Tibial artery (tissue), 4 donors: ENCODE measurements at regions of chr4 and their contacts with region 1.

Region 1: DNA sequence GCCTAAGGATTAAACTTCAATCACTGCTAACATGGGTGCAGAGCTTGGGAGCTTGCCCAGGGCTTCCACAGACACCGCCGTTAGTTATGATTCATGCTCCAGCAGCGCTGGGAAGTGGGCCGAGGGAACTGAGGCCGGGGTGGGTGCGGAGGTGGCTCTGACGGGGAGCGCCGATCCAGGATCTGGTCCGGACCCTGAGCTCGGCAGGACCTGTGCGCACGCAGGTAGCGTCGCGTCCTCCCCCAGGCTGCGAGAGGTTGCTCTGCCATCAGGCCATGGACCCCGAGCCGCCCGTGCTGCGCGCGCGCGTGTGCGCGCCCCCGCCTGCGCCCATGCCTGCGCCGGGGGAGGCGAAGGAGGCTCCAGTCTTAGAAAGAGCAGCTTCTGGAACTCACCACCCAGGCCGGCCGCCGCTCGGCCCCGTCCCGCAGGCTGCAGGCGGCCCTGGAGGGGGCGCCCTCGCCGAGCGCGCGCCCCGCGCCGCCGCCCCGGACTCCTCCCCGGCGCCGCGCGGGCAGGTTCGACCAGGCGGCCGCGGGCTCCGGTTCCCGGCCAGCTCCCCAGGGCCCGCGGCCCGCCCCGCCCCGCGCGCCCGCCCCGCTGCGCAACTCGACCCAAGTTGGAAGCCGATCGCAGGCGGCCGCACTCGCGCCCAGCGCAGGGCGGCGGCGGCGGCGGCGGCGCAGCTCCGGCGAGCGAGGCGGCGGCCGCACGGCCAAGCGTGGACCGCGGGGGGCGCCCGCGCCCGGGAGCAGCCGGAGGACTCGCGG is 729 bp upstream of the ADRA2C start:
- DNase-seq: peak; percentile 44 to 91
- H3K4me3 ChIP-seq: peak overlapping the region; percentile 73 to 74
- H3K27ac ChIP-seq: peak overlapping the region; percentile 93 to 96
- H3K4me1 ChIP-seq: peaks cover 0 to 78% (median 36%) of the 10 kb centered on the region in 4 donors
- H3K27me3 ChIP-seq: peaks cover 0 to 13% of the 10 kb centered on the region in 2 donors
- CTCF ChIP-seq: peak in 1 of 2 experiments; percentile 41

Region 2: DNA sequence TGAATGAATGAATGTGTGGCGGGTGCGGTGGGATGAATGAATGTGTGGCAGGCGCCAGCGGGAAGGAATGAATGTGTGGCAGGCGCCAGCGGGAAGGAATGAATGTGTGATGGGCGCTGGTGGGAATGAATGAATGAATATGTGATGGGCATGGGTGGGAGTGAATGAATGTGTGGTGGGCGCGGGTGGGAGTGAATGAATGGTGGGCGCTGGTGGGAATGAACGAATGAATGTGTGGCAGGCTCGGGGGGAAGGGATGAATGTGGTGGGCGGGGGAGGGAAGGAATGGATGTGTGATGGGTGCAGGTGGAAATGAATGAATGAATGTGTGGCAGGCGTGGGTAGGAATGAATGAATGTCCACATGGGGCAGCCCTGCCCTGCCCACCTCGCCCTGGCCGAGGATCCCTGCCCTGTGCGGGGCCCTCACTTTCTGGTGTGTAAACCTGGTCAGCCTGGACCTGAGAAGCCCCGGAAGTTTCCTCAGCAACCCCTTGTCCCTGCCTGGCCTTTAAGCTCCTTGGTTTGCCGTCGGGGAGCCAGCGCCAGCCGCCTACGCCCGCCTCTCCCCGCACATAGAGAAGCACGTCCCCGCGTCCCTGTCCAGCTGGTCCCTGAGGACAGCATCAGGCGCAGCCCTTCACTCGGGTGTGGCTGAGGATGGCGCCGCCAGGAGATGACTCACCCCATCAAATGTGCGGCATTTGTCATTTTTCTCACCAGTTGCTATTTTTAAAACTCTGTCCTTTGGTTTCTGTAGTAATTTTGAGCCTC is 120.4 kb before region 1 on chr4:
- intact Hi-C with region 1: loop called (anchors 5 kb)
- DNase-seq: peak; percentile 41 to 90
- H3K4me3 ChIP-seq: no peak overlapping the region
- H3K27ac ChIP-seq: peak overlapping the region; percentile 62 to 68
- H3K4me1 ChIP-seq: peaks cover 0 to 35% (median 17%) of the 10 kb centered on the region in 4 donors
- H3K27me3 ChIP-seq: peaks cover 0 to 3% of the 10 kb centered on the region in 2 donors
- CTCF ChIP-seq: no peak

Region 3: GRCh38 chr4:3708103-3708510 is 57.3 kb before region 1 on chr4:
- intact Hi-C with region 1: loop called (anchors 2 kb)
- DNase-seq: peak; percentile 74 to 96
- H3K4me3 ChIP-seq: peak overlapping the region; percentile 45 to 55
- H3K27ac ChIP-seq: peak overlapping the region; percentile 88 to 89
- H3K4me1 ChIP-seq: peaks cover 0 to 65% (median 47%) of the 10 kb centered on the region in 4 donors
- H3K27me3 ChIP-seq: peaks cover 0 to 2% of the 10 kb centered on the region in 2 donors
- CTCF ChIP-seq: no peak

Region 4: DNA sequence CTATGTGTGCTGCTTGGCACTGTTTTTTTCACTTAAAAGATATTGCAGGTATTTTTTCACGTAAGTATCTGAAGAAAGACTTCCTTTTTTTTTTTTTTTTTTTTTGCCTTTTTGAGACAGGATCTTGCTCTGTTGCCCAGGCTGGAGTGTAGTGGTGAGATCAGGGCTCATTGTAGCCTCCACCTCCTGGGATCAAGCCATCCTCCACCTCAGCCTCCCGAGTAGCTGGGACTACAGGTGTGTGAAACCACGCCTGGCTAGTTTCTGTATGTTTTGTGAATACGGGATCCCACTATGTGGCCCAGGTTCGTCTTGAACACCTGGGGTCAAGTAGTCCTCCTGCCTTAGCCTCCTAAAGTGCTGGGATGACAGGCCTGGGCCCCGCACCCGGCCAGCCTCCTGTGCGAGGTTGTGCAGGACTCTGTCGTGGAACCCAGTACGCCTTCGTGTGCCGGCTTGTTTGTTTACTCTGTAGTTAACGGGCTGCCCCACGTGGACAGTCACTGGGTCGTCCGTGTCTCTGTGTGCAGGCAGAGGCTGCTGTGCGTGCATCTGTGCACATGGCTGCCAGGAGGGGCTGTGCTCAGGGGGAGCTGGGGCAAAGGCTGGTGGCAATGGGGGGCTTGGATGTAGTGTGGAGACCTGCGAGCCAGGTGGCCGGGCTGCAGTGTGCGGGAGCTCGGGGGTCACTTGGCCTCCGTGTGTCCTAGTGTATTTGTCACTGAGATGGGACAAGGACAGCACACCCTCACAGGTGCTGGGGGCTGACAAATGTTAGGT is 180.2 kb after region 1 on chr4:
- intact Hi-C with region 1: loop called (anchors 10 kb)
- DNase-seq: no peak
- H3K4me3 ChIP-seq: no peak overlapping the region
- H3K27ac ChIP-seq: no peak overlapping the region
- H3K4me1 ChIP-seq: peaks cover 0 to 4% (median 0%) of the 10 kb centered on the region in 4 donors
- H3K27me3 ChIP-seq: peaks cover 0 to 7% of the 10 kb centered on the region in 2 donors
- CTCF ChIP-seq: no peak